ENCODE measurements at regions of chr7 and their contacts with region 1.

Region 1: DNA sequence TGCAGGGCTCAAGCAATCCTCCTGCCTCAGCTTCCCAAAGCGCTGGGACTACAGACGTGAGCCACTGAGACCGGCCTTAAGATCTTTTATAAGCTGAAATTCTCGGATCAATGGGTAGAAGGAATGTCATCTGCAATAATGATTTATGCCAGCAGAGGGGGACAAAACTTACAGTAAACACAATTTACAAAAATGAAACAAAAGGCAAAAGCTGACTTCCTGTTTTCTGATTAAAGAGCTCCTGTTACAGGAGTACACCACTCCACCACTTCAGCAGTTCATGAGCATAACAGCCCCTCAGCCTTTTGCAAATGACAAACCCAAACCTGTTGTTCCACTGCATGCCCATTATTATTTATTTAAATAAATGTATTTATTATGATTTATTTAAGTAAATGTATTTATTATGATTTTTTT is 88.5 kb upstream of the ATP6V0A4 start:
- DNase-seq: peak in 2 of 6 donors; percentile 12 to 29
- ATAC-seq: peak; percentile 61 to 88 (median 82)
- H3K4me3 ChIP-seq: no peak overlapping the region
- H3K27ac ChIP-seq: no peak overlapping the region
- H3K4me1 ChIP-seq: no peaks in the 10 kb centered on the region
- H3K27me3 ChIP-seq: no peaks in the 10 kb centered on the region
- CTCF ChIP-seq: peak; percentile 36 to 54 (median 48)

Region 2: DNA sequence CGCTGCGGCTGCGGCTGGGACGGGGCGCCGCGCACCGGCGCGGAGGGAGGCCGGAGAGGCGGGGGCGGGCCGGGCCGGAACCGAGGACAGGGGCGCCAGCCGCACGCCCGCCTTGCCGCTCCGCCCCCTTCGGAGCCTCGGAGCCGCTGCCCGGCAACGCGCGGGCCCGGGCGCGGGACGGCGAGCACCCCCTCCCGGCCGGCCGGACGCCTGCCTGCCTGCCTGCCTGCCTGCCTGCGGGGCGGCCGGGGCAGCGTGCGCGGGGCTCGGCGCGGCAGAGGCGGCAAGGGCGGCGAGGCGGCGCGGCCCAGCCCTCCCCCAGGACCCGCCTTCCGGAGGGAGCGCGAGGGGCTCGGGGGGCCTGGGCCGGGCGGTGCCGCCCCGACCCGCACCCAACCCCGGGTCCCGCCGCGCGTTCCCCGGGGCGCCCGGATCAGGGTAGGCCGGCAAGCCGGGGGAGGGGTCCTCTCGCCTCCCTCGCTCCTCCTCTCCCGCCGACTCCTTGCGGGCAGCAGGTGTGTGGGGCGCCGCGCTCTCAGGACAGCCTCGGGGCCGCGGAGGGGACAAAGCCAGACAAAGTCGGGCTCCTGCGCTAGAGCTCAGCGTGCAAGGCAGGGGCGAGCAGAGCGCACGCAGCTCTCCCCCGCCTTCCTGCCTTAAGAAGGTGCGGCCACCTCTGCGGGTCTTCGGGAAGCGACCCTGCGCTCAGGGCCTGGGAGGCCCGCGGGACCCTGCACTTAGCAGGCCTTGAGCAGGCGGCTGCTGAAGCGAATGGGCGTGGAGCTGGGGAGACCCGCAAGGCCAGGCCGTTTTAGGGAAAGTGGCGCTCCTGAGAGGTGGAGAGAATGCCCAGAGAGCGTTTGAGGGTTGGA is 95.1 kb after region 1 on chr7 and contains the start of gene KIAA1549:
- intact Hi-C with region 1: loop called in 2 of 3 experiments (anchors 10 kb)
- DNase-seq: peak; percentile 71 to 89 (median 84)
- ATAC-seq: peak; percentile 81 to 88 (median 87)
- H3K4me3 ChIP-seq: peak within 1 kb of the TSS; percentile 48 to 66 (median 52)
- H3K27ac ChIP-seq: peak within 1 kb of the TSS; percentile 40 to 58 (median 52)
- H3K4me1 ChIP-seq: peaks cover 4 to 26% (median 10%) of the 10 kb centered on the region in 3 donors
- H3K27me3 ChIP-seq: no peaks in the 10 kb centered on the region
- CTCF ChIP-seq: no peak
- total RNA-seq, gene KIAA1549: 5.1 to 8.0 (median 7.4) TPM

Region 3: GRCh38 chr7:139075031-139075652 is 188.6 kb after region 1 on chr7:
- intact Hi-C with region 1: loop called in 1 of 3 experiments (anchors 10 kb)
- DNase-seq: peak in 4 of 6 donors; percentile 37 to 68 (median 52)
- ATAC-seq: peak; percentile 80 to 98 (median 96)
- H3K4me3 ChIP-seq: no peak overlapping the region
- H3K27ac ChIP-seq: no peak overlapping the region
- H3K4me1 ChIP-seq: no peaks in the 10 kb centered on the region
- H3K27me3 ChIP-seq: no peaks in the 10 kb centered on the region
- CTCF ChIP-seq: peak; percentile 78 to 83 (median 79)